ENCODE measurements at regions of chr5 and their contacts with region 1.

Region 1: DNA sequence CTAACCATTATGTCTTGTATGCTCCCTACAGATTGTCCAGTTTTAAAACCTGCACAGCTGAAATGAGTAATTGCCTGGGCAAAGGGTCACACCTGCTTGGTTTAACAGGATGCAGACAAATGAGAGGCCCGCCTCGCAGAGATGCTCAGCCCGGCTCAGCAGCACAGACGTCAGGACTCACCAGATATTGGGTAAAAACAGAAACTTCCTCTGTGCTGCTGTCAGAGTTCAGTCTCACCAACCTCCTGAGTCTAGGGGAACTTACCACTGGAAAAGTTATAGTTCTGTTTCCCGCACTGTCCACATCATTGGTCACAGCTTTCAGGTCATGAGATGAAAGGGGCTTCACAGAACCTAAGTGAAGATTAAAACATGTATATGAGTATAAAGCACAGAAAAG is 152.5 kb downstream of the ESM1 start:
- DNase-seq: no peak
- ATAC-seq: no peak
- H3K4me3 ChIP-seq: no peak overlapping the region
- H3K27ac ChIP-seq: no peak overlapping the region
- H3K4me1 ChIP-seq: peaks cover 0 to 19% (median 7%) of the 10 kb centered on the region in 12 donors
- H3K27me3 ChIP-seq: no peaks in the 10 kb centered on the region
- CTCF ChIP-seq: no peak
- POLR2A ChIP-seq: no peak

Region 2: GRCh38 chr5:54646356-54647101 is 186.3 kb before region 1 on chr5:
- intact Hi-C with region 1: loop called in 3 of 10 experiments (anchors 5 to 10 kb)
- DNase-seq: peak; percentile 78 to 92 (median 92)
- ATAC-seq: peak; percentile 91 to 97 (median 95)
- H3K4me3 ChIP-seq: peak overlapping the region in 6 of 12 donors; percentile 3 to 29 (median 8)
- H3K27ac ChIP-seq: peak overlapping the region; percentile 65 to 96 (median 76)
- H3K4me1 ChIP-seq: peaks cover 0 to 48% (median 23%) of the 10 kb centered on the region in 12 donors
- H3K27me3 ChIP-seq: no peaks in the 10 kb centered on the region
- CTCF ChIP-seq: peak in 2 of 12 donors; percentile 5 to 10
- POLR2A ChIP-seq: no peak

Region 3: DNA sequence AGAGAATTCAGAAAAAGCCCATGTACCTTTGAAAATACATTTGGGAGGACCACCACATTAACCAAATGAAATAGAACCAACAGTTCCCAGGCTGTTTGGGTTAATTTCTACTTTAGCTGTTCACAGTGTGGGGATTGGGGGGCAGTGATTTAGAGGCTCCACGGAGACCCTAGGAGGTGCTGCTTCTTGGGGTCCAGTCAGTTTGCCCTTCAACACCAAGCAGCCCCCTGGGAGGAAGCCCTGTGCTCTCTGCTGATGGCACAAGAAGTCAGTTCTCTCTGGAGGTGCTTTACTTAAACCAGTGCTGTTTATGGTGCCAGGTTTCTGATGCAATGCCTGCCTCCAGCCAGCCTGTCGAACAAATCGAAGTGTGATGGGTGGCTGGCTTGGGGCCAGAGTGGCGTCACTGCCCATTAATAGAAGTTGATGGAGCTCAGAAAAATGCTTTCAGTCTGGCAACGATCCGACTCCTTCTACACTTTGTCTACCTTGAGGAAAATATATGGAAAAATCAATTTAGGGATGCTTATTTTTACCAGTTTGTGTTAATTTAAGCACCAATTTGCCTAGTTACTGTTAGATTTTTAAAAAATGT is 181.3 kb before region 1 on chr5:
- intact Hi-C with region 1: loop called in 3 of 10 experiments (anchors 5 to 10 kb)
- DNase-seq: peak; percentile 80 to 93 (median 87)
- ATAC-seq: peak; percentile 36 to 69 (median 65)
- H3K4me3 ChIP-seq: no peak overlapping the region
- H3K27ac ChIP-seq: peak overlapping the region in 10 of 12 donors; percentile 7 to 83 (median 38)
- H3K4me1 ChIP-seq: peaks cover 0 to 49% (median 25%) of the 10 kb centered on the region in 12 donors
- H3K27me3 ChIP-seq: no peaks in the 10 kb centered on the region
- CTCF ChIP-seq: no peak
- POLR2A ChIP-seq: no peak

Region 4: GRCh38 chr5:54719384-54720283 is 113.2 kb before region 1 on chr5:
- intact Hi-C with region 1: loop called in 4 of 10 experiments (anchors 1 to 10 kb)
- DNase-seq: peak in 4 of 5 donors; percentile 53 to 81 (median 66)
- ATAC-seq: peak; percentile 85 to 93 (median 90)
- H3K4me3 ChIP-seq: no peak overlapping the region
- H3K27ac ChIP-seq: peak overlapping the region; percentile 46 to 89 (median 71)
- H3K4me1 ChIP-seq: peaks cover 0 to 35% (median 23%) of the 10 kb centered on the region in 12 donors
- H3K27me3 ChIP-seq: no peaks in the 10 kb centered on the region
- CTCF ChIP-seq: peak in 1 of 12 donors; percentile 20
- POLR2A ChIP-seq: no peak

Region 5: GRCh38 chr5:54774281-54775170 is 58.3 kb before region 1 on chr5:
- intact Hi-C with region 1: no loop called
- DNase-seq: peak; percentile 66 to 84 (median 72)
- ATAC-seq: peak; percentile 88 to 97 (median 95)
- H3K4me3 ChIP-seq: peak overlapping the region in 2 of 12 donors; percentile 7 to 20
- H3K27ac ChIP-seq: peak overlapping the region in 4 of 12 donors; percentile 45 to 62 (median 47)
- H3K4me1 ChIP-seq: peaks cover 0 to 15% (median 0%) of the 10 kb centered on the region in 12 donors
- H3K27me3 ChIP-seq: no peaks in the 10 kb centered on the region
- CTCF ChIP-seq: no peak
- POLR2A ChIP-seq: no peak

Region 6: DNA sequence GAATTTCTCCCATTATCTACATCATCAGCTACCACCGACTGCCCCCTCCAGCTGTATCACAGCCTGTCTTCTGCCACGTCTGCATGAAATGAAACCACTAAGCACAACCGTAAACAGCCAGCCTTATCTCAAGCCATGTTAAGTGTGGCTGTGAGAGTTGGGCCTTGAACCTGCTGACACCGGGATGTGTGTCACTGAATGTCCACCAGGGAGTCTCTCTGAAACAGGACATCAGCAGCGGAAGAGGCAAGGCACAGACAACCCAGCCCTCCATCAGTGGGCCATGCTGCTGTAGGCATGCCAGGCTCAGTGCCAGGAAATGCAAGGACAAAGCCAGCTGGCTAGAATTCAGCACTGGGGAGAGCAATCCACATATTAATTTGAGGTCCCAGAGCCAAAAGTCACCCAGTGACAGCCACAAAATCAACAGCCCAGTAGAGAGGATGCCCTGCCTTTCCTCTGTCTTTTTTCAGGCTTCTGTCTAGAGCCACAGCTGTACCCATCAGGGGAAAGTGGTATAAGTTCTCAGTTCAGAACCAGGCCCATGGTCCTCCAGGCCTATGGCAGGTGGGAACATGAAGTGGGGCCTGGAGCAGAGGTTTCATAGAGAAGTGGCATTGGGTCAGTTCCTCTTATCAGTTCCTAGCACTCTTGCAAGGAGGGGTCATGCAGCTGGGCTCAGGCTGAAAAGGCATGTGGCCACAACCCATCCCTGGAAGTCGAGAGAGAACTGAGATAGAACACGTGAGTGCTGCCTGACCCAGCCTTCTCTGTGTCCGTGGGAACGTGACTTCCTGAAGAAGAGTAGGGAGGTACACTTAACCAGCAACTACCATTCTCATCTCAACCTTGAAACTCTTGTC is 46.9 kb before region 1 on chr5:
- intact Hi-C with region 1: loop called in 2 of 10 experiments (anchors 5 to 10 kb)
- DNase-seq: peak; percentile 38 to 82 (median 74)
- ATAC-seq: peak; percentile 45 to 99 (median 97)
- H3K4me3 ChIP-seq: no peak overlapping the region
- H3K27ac ChIP-seq: peak overlapping the region in 9 of 12 donors; percentile 6 to 71 (median 45)
- H3K4me1 ChIP-seq: peaks cover 0 to 22% (median 13%) of the 10 kb centered on the region in 12 donors
- H3K27me3 ChIP-seq: no peaks in the 10 kb centered on the region
- CTCF ChIP-seq: peak in 4 of 12 donors; percentile 12 to 40 (median 18)
- POLR2A ChIP-seq: no peak

Region 7: GRCh38 chr5:54792611-54793404 is 40.0 kb before region 1 on chr5:
- intact Hi-C with region 1: loop called in 3 of 10 experiments (anchors 1 to 10 kb)
- DNase-seq: no peak
- ATAC-seq: peak in 3 of 4 donors; percentile 60 to 78 (median 77)
- H3K4me3 ChIP-seq: no peak overlapping the region
- H3K27ac ChIP-seq: no peak overlapping the region
- H3K4me1 ChIP-seq: peaks cover 0 to 19% (median 7%) of the 10 kb centered on the region in 12 donors
- H3K27me3 ChIP-seq: no peaks in the 10 kb centered on the region
- CTCF ChIP-seq: no peak
- POLR2A ChIP-seq: no peak

Region 8: DNA sequence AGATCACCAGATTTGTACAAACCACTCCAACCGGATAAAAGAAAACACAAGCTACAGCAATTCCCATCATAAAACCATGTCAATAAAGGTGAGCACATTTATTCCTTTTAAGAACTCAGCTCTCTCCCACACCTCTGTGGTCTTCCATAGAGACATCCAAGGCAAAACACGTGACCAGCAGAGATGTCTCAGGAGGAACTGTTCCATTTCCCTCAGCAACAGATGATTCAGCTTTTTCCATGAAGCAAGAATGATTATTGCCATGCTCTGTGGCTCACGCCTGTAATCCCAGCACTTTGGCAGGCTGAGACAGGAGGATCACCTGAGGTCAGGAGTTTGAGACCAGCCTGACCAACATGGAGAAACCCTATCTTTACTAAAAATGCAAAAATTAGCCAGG is 207.0 kb after region 1 on chr5:
- intact Hi-C with region 1: no loop called
- DNase-seq: no peak
- ATAC-seq: no peak
- H3K4me3 ChIP-seq: no peak overlapping the region
- H3K27ac ChIP-seq: no peak overlapping the region
- H3K4me1 ChIP-seq: peaks cover 0 to 8% (median 0%) of the 10 kb centered on the region in 12 donors
- H3K27me3 ChIP-seq: no peaks in the 10 kb centered on the region
- CTCF ChIP-seq: no peak
- POLR2A ChIP-seq: no peak

Measured in heart left ventricle (tissue), 16 donors.